ENCODE measurements at regions of chr2 and their contacts with region 1.

Region 1: GRCh38 chr2:132547074-132547687 is 122.8 kb downstream of the LYPD1 start:
- DNase-seq: peak; percentile 8
- ATAC-seq: peak; percentile 78
- H3K4me3 ChIP-seq: no peak overlapping the region
- H3K27ac ChIP-seq: no peak overlapping the region
- H3K4me1 ChIP-seq: no peaks in the 10 kb centered on the region
- H3K27me3 ChIP-seq: no peaks in the 10 kb centered on the region
- CTCF ChIP-seq: peak; percentile 51 to 69 (median 60); a peak in 5 of 6 replicates
- EP300 ChIP-seq: no peak
- POLR2A ChIP-seq: no peak
- RAD21 ChIP-seq: peak; percentile 71

Region 2: DNA sequence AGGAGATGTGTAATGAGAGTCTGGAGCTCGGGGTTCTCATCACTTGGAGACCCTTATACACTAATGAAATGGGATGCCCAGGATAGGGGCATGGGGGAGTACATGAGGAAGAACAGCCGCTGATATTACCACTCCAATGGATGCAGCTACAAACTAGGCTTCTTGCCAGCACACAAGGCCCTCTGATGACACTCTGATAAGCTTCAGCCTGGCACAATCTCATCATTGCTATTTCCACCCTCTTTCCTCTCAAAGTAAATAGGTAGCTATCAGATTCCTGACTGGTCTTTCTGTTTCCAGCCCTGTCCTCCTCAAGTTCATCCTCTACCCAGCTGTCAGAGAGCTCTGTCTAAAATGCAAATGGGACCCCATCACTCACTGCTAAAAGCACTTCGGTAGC is 27.6 kb before region 1 on chr2:
- CTCF ChIA-PET with region 1: no interaction called
- POLR2A ChIA-PET with region 1: no interaction called
- RAD21 ChIA-PET with region 1: no interaction called
- SMC1A ChIA-PET with region 1: no interaction called
- in situ Hi-C with region 1: no loop called
- intact Hi-C with region 1: no loop called
- DNase-seq: no peak
- ATAC-seq: no peak
- H3K4me3 ChIP-seq: no peak overlapping the region
- H3K27ac ChIP-seq: no peak overlapping the region
- H3K4me1 ChIP-seq: no peaks in the 10 kb centered on the region
- H3K27me3 ChIP-seq: no peaks in the 10 kb centered on the region
- CTCF ChIP-seq: no peak
- EP300 ChIP-seq: no peak
- POLR2A ChIP-seq: no peak
- RAD21 ChIP-seq: no peak

Region 3: GRCh38 chr2:132562245-132562644 is 15.1 kb after region 1 on chr2:
- CTCF ChIA-PET with region 1: interaction called, 12 read pairs
- POLR2A ChIA-PET with region 1: no interaction called
- RAD21 ChIA-PET with region 1: no interaction called
- SMC1A ChIA-PET with region 1: interaction called, 10 read pairs
- in situ Hi-C with region 1: no loop called
- intact Hi-C with region 1: no loop called
- DNase-seq: no peak
- ATAC-seq: no peak
- H3K4me3 ChIP-seq: no peak overlapping the region
- H3K27ac ChIP-seq: no peak overlapping the region
- H3K4me1 ChIP-seq: no peaks in the 10 kb centered on the region
- H3K27me3 ChIP-seq: no peaks in the 10 kb centered on the region; a peak in 1 of 4 replicates
- CTCF ChIP-seq: no peak
- EP300 ChIP-seq: no peak
- POLR2A ChIP-seq: no peak
- RAD21 ChIP-seq: no peak

Region 4: DNA sequence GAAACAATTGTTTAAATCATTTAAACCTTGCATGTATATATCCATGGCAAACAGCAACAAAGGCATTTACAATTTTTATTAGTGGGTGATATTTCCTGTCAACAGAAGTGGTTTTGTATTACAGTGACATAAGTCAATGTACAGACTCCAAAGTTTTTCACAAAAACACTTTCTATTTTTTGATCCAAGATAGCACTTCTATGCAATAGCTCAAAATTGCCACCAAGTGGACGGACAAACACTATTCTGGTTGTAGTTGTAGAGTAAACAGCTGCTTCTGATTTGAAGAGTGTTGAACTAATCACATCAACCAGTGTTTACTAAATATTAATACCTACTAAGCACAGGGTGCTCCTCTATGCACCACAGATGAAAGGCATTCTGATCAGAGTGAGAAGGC is 599.7 kb after region 1 on chr2:
- CTCF ChIA-PET with region 1: interaction called, 10 read pairs
- POLR2A ChIA-PET with region 1: no interaction called
- RAD21 ChIA-PET with region 1: interaction called, 3 read pairs
- SMC1A ChIA-PET with region 1: interaction called, 3 read pairs
- in situ Hi-C with region 1: no loop called
- intact Hi-C with region 1: no loop called
- DNase-seq: no peak
- ATAC-seq: no peak
- H3K4me3 ChIP-seq: no peak overlapping the region
- H3K27ac ChIP-seq: no peak overlapping the region
- H3K4me1 ChIP-seq: no peaks in the 10 kb centered on the region
- H3K27me3 ChIP-seq: no peaks in the 10 kb centered on the region
- CTCF ChIP-seq: no peak; a peak in 1 of 6 replicates
- EP300 ChIP-seq: no peak
- POLR2A ChIP-seq: no peak
- RAD21 ChIP-seq: no peak

Region 5: DNA sequence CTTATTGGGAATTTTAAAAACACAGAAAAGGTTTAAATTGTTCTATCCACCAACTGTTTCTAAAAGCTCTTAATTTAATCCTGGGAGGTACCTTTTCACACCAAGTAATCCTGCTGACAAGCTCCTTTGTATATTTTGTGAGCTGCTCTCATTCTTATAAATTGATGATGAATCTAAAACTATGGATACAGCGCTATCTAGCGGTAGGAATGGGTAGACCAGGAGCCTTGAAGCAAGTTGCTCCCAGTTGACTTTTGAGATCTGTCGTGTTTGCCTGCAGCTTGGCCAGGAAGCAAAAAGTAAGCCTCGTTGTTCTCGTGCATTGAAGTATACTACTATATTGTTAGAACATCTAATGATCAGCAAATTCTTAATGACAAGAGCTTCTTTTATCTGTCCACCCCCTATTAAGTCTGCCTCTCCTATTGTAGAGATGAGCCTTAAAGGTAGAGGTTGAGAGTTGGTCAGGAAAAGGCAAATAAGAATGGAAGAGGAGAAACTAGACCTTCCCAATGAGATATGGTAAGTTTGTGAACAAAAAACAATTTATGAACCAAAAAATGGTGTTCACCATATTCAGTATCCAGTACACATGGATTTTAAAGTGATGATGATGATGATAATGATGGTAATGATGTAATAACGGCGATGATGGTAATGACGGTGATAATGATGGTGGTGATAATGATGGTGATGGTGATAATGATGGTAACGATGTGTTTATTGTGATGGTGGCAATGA is 1233.1 kb after region 1 on chr2:
- CTCF ChIA-PET with region 1: interaction called, 18 read pairs
- POLR2A ChIA-PET with region 1: no interaction called
- RAD21 ChIA-PET with region 1: interaction called, 12 read pairs
- SMC1A ChIA-PET with region 1: interaction called, 3 read pairs
- in situ Hi-C with region 1: no loop called
- intact Hi-C with region 1: loop called (anchors 1 kb)
- DNase-seq: peak; percentile 1
- ATAC-seq: peak; percentile 74
- H3K4me3 ChIP-seq: no peak overlapping the region
- H3K27ac ChIP-seq: no peak overlapping the region
- H3K4me1 ChIP-seq: no peaks in the 10 kb centered on the region
- H3K27me3 ChIP-seq: 0 out of 4 replicates have a peak, but pooled peaks cover 0 to 3% of the 10 kb centered on the region in 2 experiments
- CTCF ChIP-seq: peak; percentile 70 to 72 (median 71)
- EP300 ChIP-seq: no peak
- POLR2A ChIP-seq: no peak
- RAD21 ChIP-seq: peak; percentile 66

Measured in GM12878 (cell line).